Naive thymus-derived CD4-positive, alpha-beta T cell (primary cell): ENCODE measurements at regions of chr7 and their contacts with region 1.

Region 1: GRCh38 chr7:12524794-12525386 is 45.6 kb upstream of the SCIN start:
- DNase-seq: peak in 5 of 9 donors; percentile 10 to 36 (median 24)
- ATAC-seq: peak; percentile 59
- H3K4me3 ChIP-seq: no peak overlapping the region
- H3K4me3 Mint-ChIP-seq: no peak overlapping the region
- H3K27ac ChIP-seq: no peak overlapping the region
- H3K27ac Mint-ChIP-seq: no peak overlapping the region
- H3K4me1 ChIP-seq: no peaks in the 10 kb centered on the region
- H3K4me1 Mint-ChIP-seq: no peaks in the 10 kb centered on the region
- H3K27me3 ChIP-seq: no peaks in the 10 kb centered on the region
- H3K27me3 Mint-ChIP-seq: peaks cover 14 to 60% (median 37%) of the 10 kb centered on the region in 5 donors

Region 2: DNA sequence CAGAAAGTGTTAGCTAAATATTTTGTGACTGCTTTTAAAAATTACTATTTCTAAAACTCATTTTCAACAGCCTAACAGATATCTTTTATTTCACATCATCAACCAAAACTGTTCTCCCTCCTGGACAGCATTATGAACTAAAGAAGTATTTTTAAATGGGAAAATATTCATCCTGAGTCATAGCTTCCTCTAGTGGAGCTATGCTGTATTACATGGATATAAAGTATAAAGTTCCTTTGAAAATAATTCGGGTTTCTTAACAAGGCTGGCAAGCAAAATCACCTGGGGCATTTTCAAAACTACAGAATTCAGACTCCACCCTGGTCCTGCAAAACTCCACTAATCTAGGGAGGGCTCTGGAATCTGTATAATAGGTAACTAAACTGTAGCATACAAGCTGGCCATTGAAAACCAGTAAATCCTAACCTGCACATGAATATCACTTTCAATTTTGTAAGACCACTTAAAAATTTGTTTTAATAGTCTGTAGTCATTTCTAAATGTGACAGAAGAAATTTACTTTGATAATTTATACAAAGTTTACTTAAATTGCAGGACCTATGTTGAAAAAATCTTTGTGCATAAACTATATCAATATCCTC is 99.1 kb after region 1 on chr7:
- CTCF ChIA-PET with region 1: no interaction called
- POLR2A ChIA-PET with region 1: no interaction called
- intact Hi-C with region 1: loop called (anchors 1 kb)
- DNase-seq: no peak
- ATAC-seq: no peak
- H3K4me3 ChIP-seq: no peak overlapping the region
- H3K4me3 Mint-ChIP-seq: no peak overlapping the region
- H3K27ac ChIP-seq: no peak overlapping the region
- H3K27ac Mint-ChIP-seq: no peak overlapping the region
- H3K4me1 ChIP-seq: no peaks in the 10 kb centered on the region
- H3K4me1 Mint-ChIP-seq: no peaks in the 10 kb centered on the region
- H3K27me3 ChIP-seq: no peaks in the 10 kb centered on the region
- H3K27me3 Mint-ChIP-seq: peaks cover 11 to 27% (median 21%) of the 10 kb centered on the region in 5 donors

Region 3: GRCh38 chr7:13262929-13263530 is 738.1 kb after region 1 on chr7:
- CTCF ChIA-PET with region 1: interaction called, 7 read pairs
- POLR2A ChIA-PET with region 1: no interaction called
- intact Hi-C with region 1: loop called (anchors 1 kb)
- DNase-seq: peak in 6 of 9 donors; percentile 4 to 42 (median 22)
- ATAC-seq: peak; percentile 52
- H3K4me3 ChIP-seq: no peak overlapping the region
- H3K4me3 Mint-ChIP-seq: no peak overlapping the region
- H3K27ac ChIP-seq: no peak overlapping the region
- H3K27ac Mint-ChIP-seq: no peak overlapping the region
- H3K4me1 ChIP-seq: no peaks in the 10 kb centered on the region
- H3K4me1 Mint-ChIP-seq: no peaks in the 10 kb centered on the region
- H3K27me3 ChIP-seq: no peaks in the 10 kb centered on the region
- H3K27me3 Mint-ChIP-seq: peaks cover 0 to 11% (median 5%) of the 10 kb centered on the region in 5 donors

Region 4: GRCh38 chr7:13742811-13743210 is 1217.9 kb after region 1 on chr7:
- CTCF ChIA-PET with region 1: no interaction called
- POLR2A ChIA-PET with region 1: no interaction called
- intact Hi-C with region 1: loop called in 1 of 2 experiments (anchors 2 kb)
- DNase-seq: no peak
- ATAC-seq: no peak
- H3K4me3 ChIP-seq: no peak overlapping the region
- H3K4me3 Mint-ChIP-seq: no peak overlapping the region
- H3K27ac ChIP-seq: no peak overlapping the region
- H3K27ac Mint-ChIP-seq: no peak overlapping the region
- H3K4me1 ChIP-seq: no peaks in the 10 kb centered on the region
- H3K4me1 Mint-ChIP-seq: no peaks in the 10 kb centered on the region
- H3K27me3 ChIP-seq: no peaks in the 10 kb centered on the region
- H3K27me3 Mint-ChIP-seq: peaks cover 0 to 3% (median 0%) of the 10 kb centered on the region in 5 donors

Region 5: DNA sequence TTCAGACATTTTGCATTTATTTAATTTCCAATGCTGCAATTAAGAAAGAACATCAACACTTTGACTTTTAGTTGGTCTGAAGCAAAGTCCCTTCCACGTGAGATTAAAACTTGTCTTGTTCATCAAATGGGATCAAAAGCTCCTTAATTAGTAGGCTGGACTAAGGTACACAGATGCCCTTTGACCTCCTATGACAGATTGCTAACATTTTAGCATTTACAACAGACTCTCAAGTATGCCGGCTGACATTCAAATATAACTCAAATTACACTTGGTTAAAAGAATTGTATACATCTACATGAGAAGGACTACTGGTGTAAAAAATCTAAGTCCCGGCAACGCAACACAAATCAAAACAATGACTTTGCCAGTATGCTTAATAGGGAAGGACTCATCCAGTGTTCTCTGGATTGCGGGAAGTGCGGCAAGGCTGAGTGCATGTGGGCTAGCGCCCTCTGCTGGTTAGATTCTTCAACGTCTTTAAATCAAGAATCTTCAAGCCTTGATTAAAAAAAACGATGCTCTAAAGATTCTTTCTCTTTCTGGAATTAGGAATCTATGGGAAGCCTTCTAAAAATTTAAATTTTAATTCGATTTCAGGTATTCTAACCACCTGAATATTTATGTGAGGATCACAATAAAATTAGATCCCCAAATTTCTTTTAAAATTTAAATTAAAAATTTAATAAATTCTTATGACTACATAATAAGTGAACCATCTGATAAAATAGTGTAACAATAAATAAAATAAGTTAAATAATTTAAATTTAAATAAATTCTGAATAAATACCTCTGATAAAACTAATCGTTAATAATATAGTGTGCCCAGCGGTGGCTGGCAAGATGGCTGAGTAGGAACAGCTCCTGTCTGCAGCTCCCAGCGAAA is 1932.9 kb after region 1 on chr7:
- CTCF ChIA-PET with region 1: interaction called, 7 read pairs
- POLR2A ChIA-PET with region 1: no interaction called
- intact Hi-C with region 1: loop called in 1 of 2 experiments (anchors 2 kb)
- DNase-seq: peak in 4 of 9 donors; percentile 10 to 22 (median 18)
- ATAC-seq: peak; percentile 49
- H3K4me3 ChIP-seq: no peak overlapping the region
- H3K4me3 Mint-ChIP-seq: no peak overlapping the region
- H3K27ac ChIP-seq: no peak overlapping the region
- H3K27ac Mint-ChIP-seq: no peak overlapping the region
- H3K4me1 ChIP-seq: no peaks in the 10 kb centered on the region
- H3K4me1 Mint-ChIP-seq: peaks cover 0 to 4% (median 0%) of the 10 kb centered on the region in 7 donors
- H3K27me3 ChIP-seq: no peaks in the 10 kb centered on the region
- H3K27me3 Mint-ChIP-seq: peaks cover 0 to 4% (median 0%) of the 10 kb centered on the region in 5 donors